Vagina (tissue), 2 donors: ENCODE measurements at regions of chrX and their contacts with region 1.

Region 1: GRCh38 chrX:132401935-132402334 is 86.9 kb downstream of the MBNL3 start:
- DNase-seq: no peak
- H3K4me3 ChIP-seq: no peak overlapping the region
- H3K27ac ChIP-seq: no peak overlapping the region
- H3K4me1 ChIP-seq: no peaks in the 10 kb centered on the region
- H3K27me3 ChIP-seq: no peaks in the 10 kb centered on the region
- CTCF ChIP-seq: no peak
- POLR2A ChIP-seq: no peak

Region 2: DNA sequence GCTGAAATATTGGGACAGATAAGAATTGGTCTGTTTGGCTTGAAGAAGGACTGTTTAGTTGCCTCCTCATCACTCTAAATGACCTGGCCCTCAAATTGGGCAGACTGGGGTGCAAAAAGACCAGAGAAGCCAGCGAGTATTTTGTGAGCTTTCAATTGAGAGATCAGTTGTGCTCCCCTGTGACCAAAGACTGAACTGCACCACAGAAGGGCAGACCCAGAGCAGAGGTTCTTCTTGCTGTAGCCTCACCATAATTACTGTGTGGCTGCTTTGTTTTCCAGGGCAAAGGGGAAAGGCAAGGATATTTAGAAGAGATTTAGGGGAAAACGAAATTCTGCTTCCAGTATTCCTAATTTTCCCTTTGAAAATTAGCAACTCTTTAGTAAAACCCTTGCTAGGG is 190.9 kb after region 1 on chrX:
- intact Hi-C with region 1: no loop called
- DNase-seq: no peak
- H3K4me3 ChIP-seq: no peak overlapping the region
- H3K27ac ChIP-seq: no peak overlapping the region
- H3K4me1 ChIP-seq: no peaks in the 10 kb centered on the region
- H3K27me3 ChIP-seq: no peaks in the 10 kb centered on the region
- CTCF ChIP-seq: peak in 1 of 3 experiments; percentile 32
- POLR2A ChIP-seq: no peak

Region 3: DNA sequence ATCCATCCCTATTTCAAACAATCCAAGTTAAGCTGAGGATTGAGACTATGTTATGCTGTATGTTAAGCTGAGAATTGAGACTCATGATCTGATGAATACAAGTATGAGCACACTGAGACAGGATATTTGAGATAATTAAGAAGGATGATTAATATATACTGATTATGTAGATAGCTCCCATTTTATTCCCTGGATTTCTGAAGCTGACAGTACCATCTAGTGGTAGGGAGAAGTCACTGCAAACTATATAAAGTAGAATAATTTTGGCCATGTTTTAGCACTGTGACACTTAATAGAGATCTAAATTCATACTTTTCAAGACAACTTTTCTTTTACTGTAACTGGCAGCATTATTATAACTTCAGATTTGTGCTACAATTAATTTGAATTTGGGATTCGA is 1994.2 kb after region 1 on chrX:
- intact Hi-C with region 1: loop called (anchors 10 kb)
- DNase-seq: no peak
- H3K4me3 ChIP-seq: no peak overlapping the region
- H3K27ac ChIP-seq: no peak overlapping the region
- H3K4me1 ChIP-seq: no peaks in the 10 kb centered on the region
- H3K27me3 ChIP-seq: no peaks in the 10 kb centered on the region
- CTCF ChIP-seq: peak; percentile 12 to 41 (median 38)
- POLR2A ChIP-seq: no peak